ENCODE measurements at regions of chr17 and their contacts with region 1.

Region 1: DNA sequence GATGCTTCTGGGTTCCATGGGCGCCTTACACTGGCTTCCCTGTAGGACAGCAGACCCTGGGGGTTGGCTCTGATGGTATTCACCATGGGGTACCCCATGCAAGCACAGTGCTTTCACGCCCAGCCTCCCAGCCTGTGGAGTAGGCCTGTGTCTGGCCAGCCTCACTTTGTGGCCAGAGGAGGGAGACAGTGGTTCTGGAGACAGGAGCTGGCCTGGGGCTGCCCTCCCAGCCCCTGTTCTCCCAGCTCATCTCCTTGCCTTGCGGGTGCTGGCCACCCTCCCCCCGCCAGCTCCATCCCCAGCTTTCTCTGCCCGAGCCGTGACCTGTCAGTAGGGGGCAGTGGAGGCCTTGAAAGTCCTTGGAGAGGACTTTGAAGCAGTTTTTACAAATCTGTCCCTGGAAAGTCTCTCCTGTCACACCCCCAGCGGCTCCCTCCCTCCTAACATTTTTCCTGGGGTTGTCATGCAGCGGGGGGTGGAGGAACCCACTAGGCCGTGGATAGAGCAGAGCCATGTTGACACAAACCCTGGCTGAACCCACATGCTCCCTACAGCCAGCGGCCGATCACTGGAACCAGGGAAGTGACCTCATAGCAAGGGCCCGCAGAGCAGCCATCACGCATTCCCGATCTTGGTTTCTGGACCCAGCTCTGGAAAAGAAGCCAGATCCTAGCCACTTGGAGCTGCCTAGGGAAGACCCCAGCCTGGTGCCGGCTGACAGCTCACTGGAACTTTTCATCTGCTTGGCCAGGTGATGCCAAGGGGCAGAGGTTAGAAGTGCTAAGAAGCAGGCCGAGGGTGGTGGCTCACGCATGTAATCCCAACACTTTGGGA is 289.4 kb downstream of the SEC14L1 start:
- DNase-seq: peak; percentile 93
- H3K4me3 ChIP-seq: peak overlapping the region in 1 of 2 experiments; percentile 42; a peak in 1 of 4 replicates
- H3K27ac ChIP-seq: peak overlapping the region; percentile 78 to 97
- H3K4me1 ChIP-seq: peaks cover 82 to 87% of the 10 kb centered on the region in 2 experiments
- H3K27me3 ChIP-seq: no peaks in the 10 kb centered on the region
- CTCF ChIP-seq: peak; percentile 99
- EP300 ChIP-seq: peak; percentile 80 to 98
- RAD21 ChIP-seq: peak; percentile 98

Region 2: DNA sequence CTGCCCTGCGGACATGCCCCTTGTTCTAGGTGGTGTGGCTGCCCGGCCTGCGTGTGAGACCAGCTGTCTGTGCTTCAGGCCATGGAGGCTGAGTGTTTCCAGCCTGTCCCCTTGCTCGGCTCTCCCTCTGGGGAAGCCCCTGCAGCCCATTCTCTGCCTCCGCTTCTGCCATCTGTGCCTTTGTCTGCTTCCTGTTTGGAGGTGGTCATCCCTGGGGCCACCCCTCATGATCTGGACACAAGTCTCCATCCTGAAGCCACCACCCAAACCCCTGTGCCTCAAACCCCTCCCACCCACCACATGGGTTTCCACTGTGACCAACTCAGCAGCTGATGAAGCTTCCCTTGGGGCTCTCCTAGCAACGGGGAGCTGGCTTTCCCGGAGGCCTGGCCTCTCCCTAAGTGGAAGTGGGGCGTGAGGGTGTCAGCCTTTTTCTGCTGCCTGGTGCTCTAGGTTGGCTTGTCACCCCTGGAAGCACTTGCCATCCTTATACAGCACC is 104.5 kb before region 1 on chr17:
- CTCF ChIA-PET with region 1: interaction called, 205 read pairs
- POLR2A ChIA-PET with region 1: no interaction called
- DNase-seq: peak; percentile 32
- H3K4me3 ChIP-seq: no peak overlapping the region
- H3K27ac ChIP-seq: peak overlapping the region; percentile 36 to 98
- H3K4me1 ChIP-seq: peaks cover 42 to 51% of the 10 kb centered on the region in 2 experiments; a peak in 3 of 4 replicates
- H3K27me3 ChIP-seq: no peaks in the 10 kb centered on the region
- CTCF ChIP-seq: no peak
- EP300 ChIP-seq: no peak
- RAD21 ChIP-seq: no peak

Region 3: DNA sequence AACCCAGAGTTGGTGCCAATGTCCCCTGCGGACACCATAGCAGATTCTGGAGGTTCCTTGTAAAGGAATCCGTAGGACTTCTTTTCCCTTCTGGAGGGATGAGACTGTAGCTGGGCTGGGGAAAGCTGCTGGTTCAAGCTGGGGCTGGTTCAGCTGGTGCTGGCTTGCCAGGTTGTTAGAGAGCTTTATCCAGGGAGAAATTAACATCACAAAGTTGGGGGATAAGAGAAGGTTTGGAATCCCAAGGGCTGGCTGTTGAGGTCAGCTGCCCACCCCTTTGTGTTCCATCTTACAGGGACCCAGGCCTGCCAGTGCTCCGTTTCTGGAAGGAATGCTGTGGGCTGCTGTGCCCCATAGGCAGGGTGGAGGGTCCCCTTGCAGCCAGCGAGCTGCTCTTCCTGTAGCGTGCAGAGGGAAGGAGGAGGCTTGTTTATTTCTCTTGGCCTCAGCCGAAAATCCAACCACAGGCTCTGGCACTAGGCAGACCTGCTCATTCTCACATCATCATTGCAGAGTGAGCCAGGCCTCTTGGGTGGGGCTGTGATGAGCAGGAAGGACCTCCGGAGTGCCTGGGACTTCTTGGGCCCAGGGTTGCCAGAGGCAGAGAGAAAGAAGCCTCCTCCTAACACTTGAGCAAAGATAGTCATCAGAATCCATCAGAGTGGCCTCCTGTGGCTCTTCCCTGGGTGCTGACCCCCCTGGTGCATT is 38.3 kb before region 1 on chr17:
- CTCF ChIA-PET with region 1: interaction called, 364 read pairs
- POLR2A ChIA-PET with region 1: interaction called, 6 read pairs
- DNase-seq: no peak
- H3K4me3 ChIP-seq: no peak overlapping the region
- H3K27ac ChIP-seq: peak overlapping the region; percentile 73 to 83
- H3K4me1 ChIP-seq: peaks cover 60 to 76% of the 10 kb centered on the region in 2 experiments
- H3K27me3 ChIP-seq: no peaks in the 10 kb centered on the region
- CTCF ChIP-seq: no peak
- EP300 ChIP-seq: no peak; a peak in 1 of 4 replicates
- RAD21 ChIP-seq: no peak

Region 4: GRCh38 chr17:77451245-77451893 is 21.2 kb after region 1 on chr17:
- CTCF ChIA-PET with region 1: interaction called, 71 read pairs
- POLR2A ChIA-PET with region 1: interaction called, 11 read pairs
- DNase-seq: peak; percentile 93
- H3K4me3 ChIP-seq: peak overlapping the region; percentile 61 to 79
- H3K27ac ChIP-seq: peak overlapping the region; percentile 89 to 95
- H3K4me1 ChIP-seq: peaks cover 28 to 56% of the 10 kb centered on the region in 2 experiments
- H3K27me3 ChIP-seq: no peaks in the 10 kb centered on the region
- CTCF ChIP-seq: no peak
- EP300 ChIP-seq: no peak
- RAD21 ChIP-seq: no peak

Region 5: DNA sequence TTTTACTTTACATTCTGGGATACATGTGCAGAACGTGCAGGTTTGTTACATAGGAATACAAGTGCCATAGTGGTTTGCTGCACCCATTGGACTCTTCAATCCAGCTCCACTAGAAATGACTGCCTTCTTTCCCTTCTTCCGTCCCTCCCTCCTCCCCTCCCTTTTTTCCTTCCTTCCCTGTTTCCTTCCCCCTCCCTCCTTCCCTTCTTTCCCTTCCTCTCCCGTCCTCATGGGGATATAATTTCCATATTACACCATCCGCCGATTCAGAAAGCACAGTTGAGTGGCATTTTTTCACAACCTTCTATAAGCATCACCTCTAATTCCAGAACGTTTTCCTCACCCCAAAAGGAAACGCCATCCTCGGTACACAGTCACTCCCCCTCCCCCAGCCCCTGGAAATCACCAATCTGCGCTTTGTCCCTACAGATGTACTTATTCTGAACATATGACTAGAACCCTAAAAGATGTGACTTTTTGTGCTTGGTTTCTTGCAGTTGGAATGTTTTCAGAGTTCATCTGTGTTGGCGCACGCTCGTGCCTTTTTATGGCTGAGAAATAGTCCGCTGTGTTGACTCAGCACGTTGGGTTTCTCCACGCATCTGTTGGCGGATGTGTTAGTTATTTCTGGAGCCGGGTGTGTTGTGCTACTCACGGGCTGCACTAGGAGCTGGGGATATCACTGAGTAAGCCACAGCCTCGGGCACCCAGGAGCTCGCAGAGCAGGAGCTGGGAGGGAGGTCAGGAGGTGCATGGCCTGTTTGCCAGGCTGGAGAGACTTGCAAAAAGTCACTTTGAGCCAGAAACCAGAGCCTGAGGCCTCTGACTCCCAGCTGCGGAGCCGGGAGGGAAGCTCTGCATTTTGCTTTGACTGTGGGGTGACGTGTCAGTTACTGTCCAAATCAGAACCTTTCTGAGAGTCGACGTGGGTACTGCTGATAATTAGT is 47.1 kb after region 1 on chr17:
- CTCF ChIA-PET with region 1: interaction called, 55 read pairs
- POLR2A ChIA-PET with region 1: interaction called, 4 read pairs
- DNase-seq: peak; percentile 91
- H3K4me3 ChIP-seq: no peak overlapping the region
- H3K27ac ChIP-seq: peak overlapping the region; percentile 57 to 86
- H3K4me1 ChIP-seq: peaks cover 65 to 85% of the 10 kb centered on the region in 2 experiments
- H3K27me3 ChIP-seq: no peaks in the 10 kb centered on the region
- CTCF ChIP-seq: no peak
- EP300 ChIP-seq: peak in 1 of 2 experiments; percentile 73; a peak in 2 of 4 replicates
- RAD21 ChIP-seq: peak; percentile 34; the same call in 1 of the 2 replicates